Posterior cingulate gyrus (tissue), 11 donors: ENCODE measurements at regions of chr14 and their contacts with region 1.

Region 1: DNA sequence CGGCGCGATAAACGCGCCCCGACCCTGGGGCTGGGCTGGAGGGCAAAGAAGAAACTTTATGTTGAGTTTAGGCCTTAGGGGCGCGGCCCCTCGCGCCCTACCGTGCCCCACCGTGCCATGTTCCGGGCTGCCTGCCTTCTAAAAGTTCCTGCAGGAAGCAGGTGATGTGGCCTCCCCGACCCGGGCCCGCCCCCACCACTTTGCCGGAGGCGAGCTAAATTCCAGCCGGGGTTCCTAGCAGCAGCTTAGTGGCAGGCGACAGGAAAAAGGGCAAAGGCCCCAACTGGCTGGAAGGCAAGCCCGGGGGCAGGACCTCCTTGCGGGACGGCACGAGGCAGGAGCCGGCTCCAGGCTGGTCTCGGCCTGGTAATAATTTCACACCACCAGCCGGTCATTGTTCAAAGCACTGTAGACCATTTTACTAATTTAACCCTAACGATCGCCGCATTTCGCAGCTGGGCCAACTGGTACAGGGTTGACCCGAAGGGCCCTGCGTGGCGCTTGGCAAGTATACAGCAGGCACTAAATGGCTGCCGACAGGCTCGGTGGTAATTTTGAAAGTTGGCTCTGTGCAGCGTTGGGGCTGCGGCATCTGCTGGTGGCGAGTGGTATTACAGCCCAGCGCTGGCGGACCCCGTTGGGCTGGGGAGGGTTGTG is 895 bp upstream of the CCDC88C start:
- DNase-seq: peak; percentile 35 to 94 (median 69)

Region 2: GRCh38 chr14:91313154-91313850 is 105.2 kb before region 1 on chr14:
- intact Hi-C with region 1: no loop called
- DNase-seq: peak in 3 of 10 donors; percentile 44 to 78 (median 47)

Region 3: DNA sequence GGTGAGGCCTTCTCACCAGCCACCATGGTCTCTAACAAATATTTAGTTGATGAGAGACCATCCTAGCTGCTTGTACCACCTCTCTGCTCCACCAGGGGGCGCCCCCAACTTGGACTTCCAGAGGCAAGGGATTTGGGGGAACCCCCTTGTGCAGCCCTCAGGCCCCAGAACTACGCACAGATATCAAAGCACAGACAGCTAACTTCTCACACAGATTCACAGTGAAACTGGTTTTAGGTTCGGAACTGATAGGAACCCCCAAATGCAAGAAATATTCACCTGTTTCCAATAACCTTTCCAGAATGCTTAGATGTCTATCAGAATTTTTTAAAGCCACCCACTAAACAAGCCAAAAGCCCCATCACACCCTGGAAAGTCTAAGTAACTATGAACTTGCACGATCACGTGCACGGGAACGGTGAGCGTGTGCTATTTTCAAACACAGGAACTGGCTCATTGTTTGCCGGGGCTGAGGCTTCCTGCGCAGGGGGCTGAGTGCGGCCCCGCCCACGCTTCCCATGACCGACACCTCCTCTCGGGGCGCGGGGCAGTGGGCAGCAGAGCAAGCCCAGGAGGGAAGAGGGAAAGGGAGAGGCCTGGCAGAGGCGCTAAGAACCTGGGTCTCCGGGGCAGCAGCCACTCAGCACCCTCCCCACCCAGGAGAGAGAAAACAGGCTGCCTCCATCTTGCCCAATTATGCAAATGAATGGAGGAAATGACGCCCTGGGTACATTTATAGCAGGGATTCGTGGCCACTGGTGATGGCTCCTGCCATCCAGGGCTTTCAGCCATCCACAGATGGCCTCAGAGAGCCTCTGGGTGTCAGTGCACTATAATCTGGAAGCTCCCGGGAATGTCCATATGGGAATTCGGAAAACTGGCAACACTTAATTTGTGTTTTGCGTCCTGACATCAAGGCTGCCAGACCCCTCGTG is 94.6 kb before region 1 on chr14:
- intact Hi-C with region 1: loop called (anchors 1 kb)
- DNase-seq: peak; percentile 74 to 98 (median 91)

Region 4: DNA sequence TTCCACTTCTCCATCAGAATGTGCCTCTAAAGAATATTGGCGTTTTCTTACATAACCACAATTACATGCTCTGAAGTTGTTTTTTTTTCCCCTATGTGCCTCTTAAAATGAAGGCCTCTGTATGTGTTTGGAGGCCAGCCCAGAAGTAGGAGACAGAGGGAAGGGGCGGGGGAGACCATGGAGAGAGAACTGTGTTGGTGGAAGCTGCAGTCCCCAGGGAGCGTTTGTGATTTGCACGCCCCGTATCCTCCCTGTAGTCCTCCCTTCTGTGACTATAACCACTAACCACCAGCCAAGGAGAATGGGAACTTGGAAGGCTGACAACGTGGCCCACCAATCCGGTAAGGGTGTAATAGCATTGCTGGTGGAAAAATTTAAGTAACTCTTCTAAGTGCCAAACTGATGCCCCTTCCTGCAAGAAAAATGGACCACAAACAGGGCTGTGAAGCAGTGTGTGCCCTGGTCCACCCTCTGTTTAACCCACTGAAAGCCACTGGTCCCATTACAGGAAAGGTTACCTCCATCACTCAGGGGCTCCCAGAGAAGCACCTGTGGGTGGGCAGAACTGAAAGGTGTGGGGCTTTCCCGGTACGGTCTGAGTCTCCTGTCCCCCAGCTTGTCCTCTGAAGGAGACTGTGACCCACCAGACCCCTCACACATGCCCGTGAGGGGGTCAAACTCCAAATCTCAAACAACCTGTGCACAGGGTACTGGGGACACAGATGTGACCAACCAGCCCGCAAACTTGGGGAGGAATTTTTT is 37.7 kb before region 1 on chr14:
- intact Hi-C with region 1: loop called (anchors 1 kb)
- DNase-seq: peak in 1 of 10 donors; percentile 86